ENCODE measurements at regions of chr14 and their contacts with region 1.

Region 1: DNA sequence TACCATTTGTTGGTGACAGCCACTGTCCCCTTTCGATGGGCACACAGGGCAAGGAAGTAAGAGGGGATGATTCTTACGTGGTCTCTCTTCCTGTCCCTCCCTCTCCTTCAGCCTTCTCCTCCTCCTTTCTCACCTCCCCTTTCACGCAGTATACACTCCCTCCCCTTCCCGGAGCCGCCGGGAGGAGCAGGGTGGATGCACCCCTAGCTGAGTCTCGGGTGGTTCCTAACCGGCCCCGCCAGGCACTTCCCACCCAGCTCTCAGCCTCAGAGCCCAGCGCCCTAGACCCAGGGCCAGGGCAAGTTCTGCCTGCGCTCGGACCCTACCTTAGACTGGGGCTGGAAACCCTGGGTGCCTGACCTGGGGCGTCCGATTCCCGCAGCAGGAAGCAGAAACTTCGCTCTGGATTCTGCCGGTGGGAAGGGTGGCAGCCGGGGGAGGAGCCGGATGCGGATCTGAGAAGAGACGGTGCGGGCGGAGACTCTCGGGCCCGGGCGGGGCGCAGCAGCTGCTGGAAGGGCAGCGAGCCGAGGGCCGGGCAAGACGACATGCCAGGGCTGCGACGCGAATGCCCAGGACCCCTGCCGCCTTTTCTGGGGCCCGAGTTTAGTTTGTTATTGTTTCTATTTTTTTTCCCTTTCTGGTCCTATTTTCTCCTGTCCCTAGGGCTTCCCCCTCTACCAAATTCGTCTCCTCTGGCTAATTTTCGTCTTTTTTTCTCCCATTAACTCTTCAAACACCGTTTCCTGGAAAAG is at the start of gene TEP1:
- DNase-seq: peak; percentile 33 to 84 (median 74)
- ATAC-seq: peak; percentile 63
- H3K4me3 ChIP-seq: peak within 1 kb of the TSS; percentile 66 to 97
- H3K4me3 Mint-ChIP-seq: peak within 1 kb of the TSS; percentile 91
- H3K27ac ChIP-seq: peak within 1 kb of the TSS; percentile 80 to 85
- H3K27ac Mint-ChIP-seq: peak within 1 kb of the TSS; percentile 93
- H3K4me1 ChIP-seq: peaks cover 31% of the 10 kb centered on the region
- H3K4me1 Mint-ChIP-seq: peaks cover 48% of the 10 kb centered on the region
- H3K27me3 ChIP-seq: no peaks in the 10 kb centered on the region
- H3K27me3 Mint-ChIP-seq: no peaks in the 10 kb centered on the region
- CTCF ChIP-seq: no peak
- total RNA-seq, gene TEP1: 16.9 to 20.2 TPM

Region 2: GRCh38 chr14:20327005-20327869 is 86.0 kb before region 1 on chr14:
- CTCF ChIA-PET with region 1: interaction called, 15 read pairs
- POLR2A ChIA-PET with region 1: interaction called, 5 read pairs
- intact Hi-C with region 1: loop called in 1 of 2 experiments (anchors 2 kb)
- DNase-seq: peak in 3 of 9 experiments; percentile 35 to 83 (median 76)
- ATAC-seq: peak; percentile 62
- H3K4me3 ChIP-seq: no peak overlapping the region
- H3K4me3 Mint-ChIP-seq: no peak overlapping the region
- H3K27ac ChIP-seq: no peak overlapping the region
- H3K27ac Mint-ChIP-seq: peak overlapping the region; percentile 62
- H3K4me1 ChIP-seq: peaks cover 6% of the 10 kb centered on the region
- H3K4me1 Mint-ChIP-seq: peaks cover 26% of the 10 kb centered on the region
- H3K27me3 ChIP-seq: no peaks in the 10 kb centered on the region
- H3K27me3 Mint-ChIP-seq: no peaks in the 10 kb centered on the region
- CTCF ChIP-seq: peak; percentile 98

Region 3: DNA sequence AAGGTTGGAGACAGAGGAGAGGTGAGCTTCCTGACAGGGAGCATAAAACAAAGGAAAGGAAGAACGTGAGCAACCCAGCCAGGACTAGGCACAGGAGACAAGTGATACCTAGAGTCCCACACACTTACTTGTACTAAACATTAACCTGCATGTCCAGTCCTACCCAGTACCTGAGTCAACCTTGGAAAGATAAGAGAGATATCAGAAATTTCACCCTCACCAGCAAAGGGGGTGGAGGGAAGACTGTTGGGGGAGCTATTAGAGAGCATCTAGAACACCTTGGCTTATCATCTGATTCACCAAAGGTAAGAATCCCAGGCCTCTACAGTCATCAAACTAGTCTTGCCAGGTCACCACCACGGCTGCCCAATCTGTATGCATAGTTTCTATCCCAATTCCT is 11.6 kb after region 1 on chr14:
- CTCF ChIA-PET with region 1: interaction called, 23 read pairs
- POLR2A ChIA-PET with region 1: interaction called, 3 read pairs
- intact Hi-C with region 1: no loop called
- DNase-seq: no peak
- ATAC-seq: no peak
- H3K4me3 ChIP-seq: no peak overlapping the region
- H3K4me3 Mint-ChIP-seq: no peak overlapping the region
- H3K27ac ChIP-seq: no peak overlapping the region
- H3K27ac Mint-ChIP-seq: no peak overlapping the region
- H3K4me1 ChIP-seq: peaks cover 28% of the 10 kb centered on the region
- H3K4me1 Mint-ChIP-seq: peaks cover 36% of the 10 kb centered on the region
- H3K27me3 ChIP-seq: no peaks in the 10 kb centered on the region
- H3K27me3 Mint-ChIP-seq: no peaks in the 10 kb centered on the region
- CTCF ChIP-seq: no peak

Region 4: GRCh38 chr14:20454516-20455354 is 41.5 kb after region 1 on chr14 and contains the starts of genes APEX1 and OSGEP:
- CTCF ChIA-PET with region 1: interaction called, 23 read pairs
- POLR2A ChIA-PET with region 1: interaction called, 14 read pairs
- intact Hi-C with region 1: loop called (anchors 1 kb)
- DNase-seq: peak; percentile 96 to 100 (median 97)
- ATAC-seq: peak; percentile 80
- H3K4me3 ChIP-seq: peak within 1 kb of the TSS; percentile 73 to 82
- H3K4me3 Mint-ChIP-seq: no peak within 1 kb of the TSS
- H3K27ac ChIP-seq: peak within 1 kb of the TSS; percentile 89 to 96
- H3K27ac Mint-ChIP-seq: no peak within 1 kb of the TSS
- H3K4me1 ChIP-seq: peaks cover 32% of the 10 kb centered on the region
- H3K4me1 Mint-ChIP-seq: peaks cover 22% of the 10 kb centered on the region
- H3K27me3 ChIP-seq: no peaks in the 10 kb centered on the region
- H3K27me3 Mint-ChIP-seq: no peaks in the 10 kb centered on the region
- CTCF ChIP-seq: no peak
- total RNA-seq, gene APEX1: 120 to 123 TPM
- total RNA-seq, gene OSGEP: 40.7 to 47.4 TPM

Region 5: DNA sequence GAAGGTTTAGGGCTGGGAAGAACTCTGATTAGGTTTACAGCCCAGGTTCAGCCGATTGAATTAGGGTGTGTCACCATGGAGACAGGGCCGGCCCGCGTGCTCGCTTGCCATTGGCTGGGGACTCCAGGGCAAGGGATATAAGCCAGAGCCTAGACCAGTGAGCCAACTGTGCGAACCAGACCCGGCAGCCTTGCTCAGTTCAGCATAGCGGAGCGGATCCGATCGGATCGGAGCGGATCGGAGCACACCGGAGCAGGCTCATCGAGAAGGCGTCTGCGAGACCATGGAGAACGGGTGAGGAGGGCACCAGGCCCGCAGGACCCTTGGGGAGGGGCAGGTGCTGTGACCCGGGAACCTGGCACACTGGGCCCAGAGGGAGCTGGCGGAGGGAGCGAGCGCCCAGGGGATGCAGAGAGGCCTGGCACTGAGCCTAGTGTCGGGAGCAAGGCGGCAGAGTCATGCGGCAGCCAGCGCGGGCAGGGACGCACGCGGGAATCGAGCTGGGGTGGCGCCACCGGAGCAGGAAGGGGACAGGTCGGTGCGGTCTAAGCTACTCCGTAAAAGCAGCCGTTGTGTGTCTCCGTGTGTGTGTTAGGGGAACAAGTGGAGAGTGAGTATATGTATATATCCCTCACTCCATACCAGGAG is 56.1 kb after region 1 on chr14 and contains the start of gene PNP:
- CTCF ChIA-PET with region 1: interaction called, 13 read pairs
- POLR2A ChIA-PET with region 1: interaction called, 10 read pairs
- intact Hi-C with region 1: loop called in 1 of 2 experiments (anchors 2 kb)
- DNase-seq: peak; percentile 74 to 93 (median 86)
- ATAC-seq: peak; percentile 85
- H3K4me3 ChIP-seq: peak within 1 kb of the TSS; percentile 91 to 93
- H3K4me3 Mint-ChIP-seq: peak within 1 kb of the TSS; percentile 98
- H3K27ac ChIP-seq: peak within 1 kb of the TSS; percentile 74 to 88
- H3K27ac Mint-ChIP-seq: peak within 1 kb of the TSS; percentile 97
- H3K4me1 ChIP-seq: peaks cover 35% of the 10 kb centered on the region
- H3K4me1 Mint-ChIP-seq: peaks cover 51% of the 10 kb centered on the region
- H3K27me3 ChIP-seq: no peaks in the 10 kb centered on the region
- H3K27me3 Mint-ChIP-seq: no peaks in the 10 kb centered on the region
- CTCF ChIP-seq: no peak
- total RNA-seq, gene PNP: 59.6 to 62.1 TPM

Region 6: DNA sequence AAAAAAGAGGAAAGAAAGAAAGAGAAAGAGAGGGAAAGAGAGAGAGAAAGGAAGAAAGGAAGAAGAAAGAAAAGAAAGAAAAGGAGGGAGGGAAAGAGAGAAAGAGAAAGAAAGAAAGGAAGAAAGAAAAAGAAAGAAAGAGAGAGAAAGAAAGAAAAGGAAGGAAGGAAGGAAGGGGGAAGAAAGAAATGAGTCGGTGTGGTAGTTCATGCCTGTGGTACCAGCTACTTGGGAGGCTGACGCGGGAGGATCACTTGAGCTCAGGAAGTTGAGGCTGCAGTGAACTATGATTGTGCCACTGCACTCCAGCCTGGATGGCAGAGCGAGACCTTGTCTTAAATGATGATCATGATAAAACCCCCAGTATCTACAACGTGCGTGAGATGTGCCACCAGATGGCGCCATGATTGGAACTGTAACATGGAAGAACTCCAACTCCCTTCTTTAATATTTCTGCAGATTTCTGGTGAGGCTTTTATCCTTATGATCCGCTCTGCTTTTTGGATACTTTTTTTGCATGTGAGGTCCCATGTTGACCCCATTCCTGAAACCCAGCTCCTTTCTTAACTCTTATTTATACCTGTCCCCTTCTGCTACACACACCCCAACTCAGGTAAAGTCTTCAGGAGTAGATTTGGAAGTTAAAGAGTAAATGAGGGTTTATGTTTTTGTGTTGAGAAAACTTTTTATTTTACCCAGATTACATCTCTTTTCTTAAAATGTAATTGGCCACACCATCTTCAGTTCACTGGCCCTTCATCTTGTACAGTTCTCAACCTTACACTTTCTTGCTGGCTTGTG is 117.7 kb after region 1 on chr14:
- CTCF ChIA-PET with region 1: interaction called, 4 read pairs
- POLR2A ChIA-PET with region 1: no interaction called
- intact Hi-C with region 1: loop called in 1 of 2 experiments (anchors 2 kb)
- DNase-seq: peak; percentile 37 to 83 (median 72)
- ATAC-seq: peak; percentile 76
- H3K4me3 ChIP-seq: no peak overlapping the region
- H3K4me3 Mint-ChIP-seq: peak overlapping the region; percentile 48
- H3K27ac ChIP-seq: no peak overlapping the region
- H3K27ac Mint-ChIP-seq: no peak overlapping the region
- H3K4me1 ChIP-seq: no peaks in the 10 kb centered on the region
- H3K4me1 Mint-ChIP-seq: peaks cover 7% of the 10 kb centered on the region
- H3K27me3 ChIP-seq: peaks cover 0 to 2% of the 10 kb centered on the region in 2 experiments
- H3K27me3 Mint-ChIP-seq: peaks cover 8% of the 10 kb centered on the region
- CTCF ChIP-seq: peak; percentile 79